ENCODE measurements at regions of chr7 and their contacts with region 1.

Region 1: GRCh38 chr7:74587435-74588126 is 69.9 kb upstream of the GTF2I start:
- DNase-seq: peak; percentile 60 to 92
- H3K4me3 ChIP-seq: peak overlapping the region; percentile 15 to 16
- H3K27ac ChIP-seq: peak overlapping the region; percentile 59 to 78
- H3K4me1 ChIP-seq: peaks cover 4 to 14% of the 10 kb centered on the region in 2 donors
- H3K27me3 ChIP-seq: no peaks in the 10 kb centered on the region
- CTCF ChIP-seq: no peak

Region 2: DNA sequence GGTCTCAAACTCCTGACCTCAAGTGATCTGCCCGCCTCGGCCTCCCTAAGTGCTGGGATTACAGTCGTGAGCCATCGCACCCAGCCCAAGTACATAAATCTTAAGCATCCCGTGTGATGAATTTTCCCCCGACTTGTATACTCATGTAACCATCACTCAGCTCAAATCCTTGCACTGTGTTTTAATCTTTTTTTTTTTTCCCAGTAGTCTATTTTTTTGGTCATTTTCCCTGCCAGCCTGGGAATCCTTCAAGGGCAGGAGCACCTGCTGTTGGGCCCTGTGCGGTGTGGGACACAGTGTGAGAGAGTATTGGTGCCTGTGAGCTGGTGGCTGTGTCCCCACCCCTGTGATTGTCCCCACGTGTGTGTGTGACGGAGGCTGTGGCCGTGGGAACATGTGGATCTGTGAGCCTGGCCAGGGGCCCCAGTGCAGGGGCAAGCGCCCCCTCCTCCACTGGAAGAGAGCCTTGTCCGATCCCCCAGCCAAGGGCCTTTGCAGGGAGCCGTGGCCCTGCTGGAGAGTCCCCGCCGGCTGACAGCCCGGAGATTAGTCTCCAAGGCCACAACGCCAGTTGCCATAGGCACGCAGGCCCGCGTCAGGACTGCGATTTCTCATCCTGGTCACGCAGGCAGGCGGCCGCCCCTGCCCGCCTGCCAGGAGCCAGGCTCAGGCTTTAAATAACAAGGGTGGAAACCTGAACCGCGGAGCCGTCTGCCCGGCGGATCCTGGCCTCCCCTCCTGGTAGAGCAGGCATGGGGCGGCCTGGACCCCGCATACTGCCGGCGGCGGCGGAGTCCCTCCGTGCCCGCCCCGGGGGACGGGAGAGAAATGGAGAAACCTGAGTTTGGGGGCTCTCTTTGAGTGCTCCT is 107.4 kb before region 1 on chr7:
- intact Hi-C with region 1: no loop called
- DNase-seq: peak; percentile 59 to 94
- H3K4me3 ChIP-seq: peak overlapping the region; percentile 45 to 57
- H3K27ac ChIP-seq: peak overlapping the region; percentile 90 to 95
- H3K4me1 ChIP-seq: peaks cover 25 to 44% of the 10 kb centered on the region in 2 donors
- H3K27me3 ChIP-seq: no peaks in the 10 kb centered on the region
- CTCF ChIP-seq: no peak

Region 3: DNA sequence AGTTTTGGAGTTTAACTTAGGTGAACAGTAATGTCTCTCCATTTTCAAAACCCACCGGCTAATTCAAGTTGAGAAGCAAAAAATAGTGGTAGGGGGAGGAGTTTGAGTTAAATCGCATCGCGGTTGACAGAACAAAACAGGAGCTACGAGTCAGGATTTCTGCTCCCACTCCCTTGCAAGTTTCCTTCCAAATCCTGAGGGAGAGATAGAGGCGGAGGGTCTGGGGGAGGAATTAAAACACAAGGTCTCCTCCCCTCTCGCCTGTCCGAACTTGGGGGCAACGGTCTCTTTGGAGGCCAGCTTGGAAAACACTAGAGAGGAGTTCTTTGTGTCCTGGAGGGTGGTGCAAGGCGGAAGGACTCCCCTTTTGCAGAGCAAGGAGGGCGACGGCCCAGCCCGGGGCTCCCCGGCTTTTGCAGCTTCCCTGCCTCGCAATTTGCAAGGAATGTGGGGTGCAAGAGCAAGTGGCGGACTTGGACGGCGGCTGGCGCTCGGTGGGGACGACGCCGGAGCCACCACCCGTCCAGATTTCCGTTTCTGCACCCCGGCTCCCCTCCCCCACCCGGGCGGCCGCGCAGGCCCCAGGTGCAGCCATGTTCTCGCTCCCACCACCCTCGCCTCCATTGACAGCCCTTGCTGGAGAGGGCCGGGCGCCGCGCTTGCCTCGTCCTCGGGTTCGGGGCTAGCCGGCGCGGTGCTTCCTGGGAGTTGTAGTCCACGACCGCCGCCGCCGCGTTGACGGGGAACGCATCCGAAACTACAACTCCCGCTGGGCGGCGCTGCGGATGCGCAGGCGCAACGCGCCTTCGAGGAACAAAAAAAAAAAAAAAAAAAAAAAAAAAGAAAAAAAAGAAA is 69.5 kb after region 1 on chr7:
- intact Hi-C with region 1: loop called (anchors 2 kb)
- DNase-seq: peak; percentile 90 to 99
- H3K4me3 ChIP-seq: peak overlapping the region; percentile 92 to 95
- H3K27ac ChIP-seq: peak overlapping the region; percentile 85 to 98
- H3K4me1 ChIP-seq: peaks cover 0 to 29% of the 10 kb centered on the region in 2 donors
- H3K27me3 ChIP-seq: no peaks in the 10 kb centered on the region
- CTCF ChIP-seq: peak in 1 of 3 experiments; percentile 24